Activated naive CD4-positive, alpha-beta T cell treated with anti-CD3 and anti-CD28 coated beads for 36 hours (primary cell): ENCODE measurements at regions of chr2 and their contacts with region 1.

Region 1: DNA sequence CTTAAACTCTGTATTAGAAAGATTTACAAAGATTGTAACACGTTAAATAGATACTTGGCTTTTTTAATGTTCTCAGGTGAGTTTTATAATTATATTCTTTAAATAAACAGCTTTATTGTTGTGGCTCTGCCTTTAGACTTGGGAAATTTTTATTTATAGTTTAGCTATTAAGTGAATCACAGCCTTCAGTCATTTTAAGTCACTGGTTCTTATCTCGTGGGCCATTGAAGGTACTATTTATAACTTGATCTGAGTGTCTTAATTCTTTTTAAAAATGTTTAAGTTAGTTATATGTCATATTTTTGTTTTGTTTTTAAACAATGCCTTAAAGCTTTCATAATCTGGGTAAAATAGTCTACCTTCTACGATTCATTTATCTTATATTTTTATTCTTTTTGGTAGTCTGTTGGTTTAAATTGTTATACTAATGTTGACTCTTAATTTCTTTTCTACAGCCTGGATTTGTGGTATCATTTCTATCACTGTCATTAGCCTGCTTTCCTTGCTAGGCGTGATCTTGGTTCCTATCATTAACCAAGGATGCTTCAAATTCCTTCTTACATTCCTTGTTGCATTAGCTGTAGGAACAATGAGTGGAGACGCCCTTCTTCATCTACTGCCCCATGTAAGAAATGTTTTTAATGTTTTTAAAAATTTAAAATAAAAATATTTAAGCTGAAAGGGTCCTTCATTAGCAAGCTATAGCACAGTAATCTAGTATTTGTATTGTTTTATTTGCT is 49.3 kb downstream of the SLC39A10 start:
- DNase-seq: no peak
- H3K4me3 Mint-ChIP-seq: no peak overlapping the region
- H3K27ac Mint-ChIP-seq: no peak overlapping the region
- H3K4me1 Mint-ChIP-seq: peaks cover 4% of the 10 kb centered on the region
- H3K27me3 Mint-ChIP-seq: no peaks in the 10 kb centered on the region

Region 2: GRCh38 chr2:195721042-195721441 is 14.7 kb after region 1 on chr2:
- CTCF ChIA-PET with region 1: interaction called, 5 read pairs
- intact Hi-C with region 1: loop called (anchors 2 kb)
- DNase-seq: no peak
- H3K4me3 Mint-ChIP-seq: no peak overlapping the region
- H3K27ac Mint-ChIP-seq: no peak overlapping the region
- H3K4me1 Mint-ChIP-seq: peaks cover 4% of the 10 kb centered on the region
- H3K27me3 Mint-ChIP-seq: no peaks in the 10 kb centered on the region